Naive thymus-derived CD4-positive, alpha-beta T cell (primary cell): ENCODE measurements at regions of chr17 and their contacts with region 1.

Region 1: GRCh38 chr17:4789901-4790704 is 1.3 kb downstream of the GLTPD2 start:
- DNase-seq: peak; percentile 66 to 87 (median 78)
- ATAC-seq: peak; percentile 93
- H3K4me3 ChIP-seq: peak overlapping the region; percentile 75
- H3K4me3 Mint-ChIP-seq: peak overlapping the region; percentile 67 to 94 (median 88)
- H3K27ac ChIP-seq: peak overlapping the region; percentile 73
- H3K27ac Mint-ChIP-seq: peak overlapping the region; percentile 1 to 93 (median 89)
- H3K4me1 ChIP-seq: peaks cover 15 to 20% of the 10 kb centered on the region in 2 donors
- H3K4me1 Mint-ChIP-seq: peaks cover 11 to 34% (median 19%) of the 10 kb centered on the region in 7 donors
- H3K27me3 ChIP-seq: peaks cover 0 to 11% of the 10 kb centered on the region in 2 donors
- H3K27me3 Mint-ChIP-seq: peaks cover 23 to 49% (median 31%) of the 10 kb centered on the region in 5 donors

Region 2: DNA sequence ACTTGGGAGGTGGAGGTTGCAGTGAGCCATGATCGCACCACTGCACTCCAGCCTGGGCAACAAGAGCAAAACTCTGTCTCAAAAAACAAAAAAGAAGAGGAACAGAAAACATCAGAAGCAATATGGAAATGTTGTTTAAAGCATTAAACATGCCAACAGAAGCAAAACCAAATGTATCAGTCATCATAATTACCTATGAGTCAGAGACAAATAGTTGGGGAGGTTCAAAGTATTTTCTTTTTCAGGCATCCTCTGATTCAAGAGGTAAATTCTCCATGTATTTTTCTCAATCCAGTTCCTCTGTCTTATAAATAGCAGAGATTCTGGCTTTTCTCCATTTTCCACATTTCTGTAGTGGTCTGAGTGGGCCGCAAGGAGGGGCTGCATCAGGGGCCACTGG is 20.5 kb before region 1 on chr17:
- CTCF ChIA-PET with region 1: no interaction called
- POLR2A ChIA-PET with region 1: no interaction called
- intact Hi-C with region 1: no loop called
- DNase-seq: no peak
- ATAC-seq: no peak
- H3K4me3 ChIP-seq: no peak overlapping the region
- H3K4me3 Mint-ChIP-seq: no peak overlapping the region
- H3K27ac ChIP-seq: no peak overlapping the region
- H3K27ac Mint-ChIP-seq: no peak overlapping the region
- H3K4me1 ChIP-seq: peaks cover 0 to 7% of the 10 kb centered on the region in 2 donors
- H3K4me1 Mint-ChIP-seq: peaks cover 6 to 17% (median 7%) of the 10 kb centered on the region in 7 donors
- H3K27me3 ChIP-seq: no peaks in the 10 kb centered on the region
- H3K27me3 Mint-ChIP-seq: peaks cover 0 to 9% (median 6%) of the 10 kb centered on the region in 5 donors

Region 3: GRCh38 chr17:4806777-4807604 is 16.9 kb after region 1 on chr17 and contains the start of gene PLD2:
- CTCF ChIA-PET with region 1: no interaction called
- POLR2A ChIA-PET with region 1: interaction called, 12 read pairs
- intact Hi-C with region 1: loop called (anchors 1 kb)
- DNase-seq: peak; percentile 71 to 95 (median 80)
- ATAC-seq: peak; percentile 100
- H3K4me3 ChIP-seq: peak within 1 kb of the TSS; percentile 47
- H3K4me3 Mint-ChIP-seq: peak within 1 kb of the TSS; percentile 71 to 88 (median 80)
- H3K27ac ChIP-seq: peak within 1 kb of the TSS; percentile 79
- H3K27ac Mint-ChIP-seq: peak within 1 kb of the TSS in 7 of 9 donors; percentile 48 to 78 (median 62)
- H3K4me1 ChIP-seq: peaks cover 0 to 5% of the 10 kb centered on the region in 2 donors
- H3K4me1 Mint-ChIP-seq: peaks cover 7 to 23% (median 19%) of the 10 kb centered on the region in 7 donors
- H3K27me3 ChIP-seq: no peaks in the 10 kb centered on the region
- H3K27me3 Mint-ChIP-seq: peaks cover 0 to 7% (median 0%) of the 10 kb centered on the region in 5 donors
- total RNA-seq, gene PLD2: 22.9 to 42.7 (median 26.8) TPM

Region 4: GRCh38 chr17:4881761-4882555 is 91.9 kb after region 1 on chr17:
- CTCF ChIA-PET with region 1: interaction called, 5 read pairs
- POLR2A ChIA-PET with region 1: no interaction called
- intact Hi-C with region 1: loop called in 1 of 2 experiments (anchors 1 kb)
- DNase-seq: peak; percentile 51 to 73 (median 61)
- ATAC-seq: peak; percentile 90
- H3K4me3 ChIP-seq: no peak overlapping the region
- H3K4me3 Mint-ChIP-seq: no peak overlapping the region
- H3K27ac ChIP-seq: no peak overlapping the region
- H3K27ac Mint-ChIP-seq: no peak overlapping the region
- H3K4me1 ChIP-seq: no peaks in the 10 kb centered on the region
- H3K4me1 Mint-ChIP-seq: peaks cover 0 to 4% (median 0%) of the 10 kb centered on the region in 7 donors
- H3K27me3 ChIP-seq: no peaks in the 10 kb centered on the region
- H3K27me3 Mint-ChIP-seq: no peaks in the 10 kb centered on the region

Region 5: GRCh38 chr17:5381542-5381941 is 591.4 kb after region 1 on chr17:
- CTCF ChIA-PET with region 1: no interaction called
- POLR2A ChIA-PET with region 1: no interaction called
- intact Hi-C with region 1: no loop called
- DNase-seq: no peak
- ATAC-seq: no peak
- H3K4me3 ChIP-seq: no peak overlapping the region
- H3K4me3 Mint-ChIP-seq: no peak overlapping the region
- H3K27ac ChIP-seq: no peak overlapping the region
- H3K27ac Mint-ChIP-seq: peak overlapping the region in 4 of 9 donors; percentile 12 to 18 (median 15)
- H3K4me1 ChIP-seq: no peaks in the 10 kb centered on the region
- H3K4me1 Mint-ChIP-seq: peaks cover 0 to 9% (median 3%) of the 10 kb centered on the region in 7 donors
- H3K27me3 ChIP-seq: no peaks in the 10 kb centered on the region
- H3K27me3 Mint-ChIP-seq: no peaks in the 10 kb centered on the region